Astrocyte of the cerebellum (primary cell): ENCODE measurements at regions of chr5 and their contacts with region 1.

Region 1: DNA sequence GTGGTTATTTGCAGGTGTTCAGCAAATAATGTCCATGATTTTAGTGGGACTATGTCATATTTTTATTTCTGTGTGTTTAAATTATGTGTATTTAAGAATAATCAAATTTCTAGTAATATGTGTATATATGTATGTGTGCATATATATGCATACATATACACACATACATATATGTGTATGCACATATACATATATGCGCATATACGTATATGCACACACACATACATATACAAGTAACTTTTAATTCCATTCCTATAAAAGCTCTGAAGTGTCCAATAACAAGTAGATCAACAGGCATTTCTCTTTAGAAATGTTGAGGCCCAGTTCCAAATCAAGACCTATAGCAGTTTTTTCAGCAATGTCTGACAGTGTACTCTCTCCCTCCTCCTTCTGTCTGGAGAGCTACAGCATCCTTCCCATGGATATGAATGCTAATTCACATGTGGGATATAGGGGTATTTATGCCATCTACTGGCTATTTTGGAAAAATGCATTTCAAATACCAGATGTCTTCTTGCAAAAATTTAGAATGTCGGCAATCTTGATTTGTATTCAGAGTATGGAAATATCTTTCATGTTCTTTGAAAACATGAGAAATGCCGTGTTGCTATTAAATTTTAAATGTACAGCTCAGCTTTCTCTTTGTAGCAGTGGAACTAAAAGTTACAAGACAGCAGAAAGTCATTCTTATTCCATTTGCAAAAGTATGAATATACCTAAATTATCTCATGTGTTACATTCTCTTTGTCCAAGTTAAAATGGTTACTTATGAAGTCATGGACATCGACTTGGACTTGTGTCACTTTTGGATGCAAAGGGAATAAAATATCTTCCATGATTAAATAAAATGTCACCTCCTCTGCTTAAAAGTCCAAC is 647.7 kb downstream of the TAF11L14 start:
- DNase-seq: peak; percentile 50
- H3K4me3 ChIP-seq: no peak overlapping the region
- CTCF ChIP-seq: peak; percentile 52

Region 2: GRCh38 chr5:17216176-17216973 is 1065.5 kb before region 1 on chr5:
- in situ Hi-C with region 1: loop called (anchors 25 kb)
- DNase-seq: peak; percentile 76
- H3K4me3 ChIP-seq: peak overlapping the region; percentile 94
- CTCF ChIP-seq: peak; percentile 74

Region 3: DNA sequence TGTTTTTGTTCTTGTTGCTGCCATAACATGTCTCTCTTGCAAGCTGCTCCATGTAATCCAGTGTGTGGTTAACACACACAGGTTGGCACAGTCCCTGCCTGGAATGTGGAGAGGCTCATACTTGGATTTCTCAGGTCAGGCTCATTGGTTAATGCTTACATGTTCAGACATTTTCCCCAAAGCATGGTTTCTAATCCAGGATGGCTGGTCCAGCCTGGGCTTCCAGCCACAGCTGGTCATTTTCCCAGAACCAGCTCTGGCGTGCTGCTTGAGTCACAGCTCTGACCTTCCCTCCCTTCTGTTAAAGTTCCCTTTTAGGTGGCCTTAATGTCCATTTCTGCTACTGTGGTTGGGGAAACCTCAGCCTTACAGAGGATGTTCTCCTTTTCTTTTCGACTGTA is 353.3 kb before region 1 on chr5:
- in situ Hi-C with region 1: no loop called
- DNase-seq: peak; percentile 23
- H3K4me3 ChIP-seq: no peak overlapping the region
- CTCF ChIP-seq: no peak